ACHN (cell line): ENCODE measurements at regions of chr7 and their contacts with region 1.

Region 1: DNA sequence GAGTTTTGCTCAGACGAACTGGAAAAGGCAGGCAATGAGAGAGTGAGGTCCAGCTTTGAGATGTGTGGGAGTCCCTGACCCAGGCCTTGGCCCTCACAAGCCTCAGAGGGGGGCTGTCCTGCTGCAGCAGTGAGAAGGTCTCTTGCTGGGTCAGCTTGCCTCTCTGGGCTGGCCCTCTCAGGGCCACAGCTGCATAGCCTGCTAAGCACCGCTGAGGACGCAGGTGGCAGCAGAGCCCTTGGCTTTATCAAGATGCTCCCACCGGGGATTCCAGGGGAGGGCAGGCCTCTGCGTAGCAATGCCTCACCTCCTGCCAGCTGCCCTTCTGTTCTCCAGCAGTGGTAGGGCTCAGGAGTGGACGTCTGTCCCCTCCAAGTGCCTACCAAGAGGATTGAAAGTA is 128.7 kb downstream of the COBL start:
- DNase-seq: no peak

Region 2: GRCh38 chr7:50953820-50954219 is 234.1 kb before region 1 on chr7:
- in situ Hi-C with region 1: no loop called
- DNase-seq: no peak

Region 3: DNA sequence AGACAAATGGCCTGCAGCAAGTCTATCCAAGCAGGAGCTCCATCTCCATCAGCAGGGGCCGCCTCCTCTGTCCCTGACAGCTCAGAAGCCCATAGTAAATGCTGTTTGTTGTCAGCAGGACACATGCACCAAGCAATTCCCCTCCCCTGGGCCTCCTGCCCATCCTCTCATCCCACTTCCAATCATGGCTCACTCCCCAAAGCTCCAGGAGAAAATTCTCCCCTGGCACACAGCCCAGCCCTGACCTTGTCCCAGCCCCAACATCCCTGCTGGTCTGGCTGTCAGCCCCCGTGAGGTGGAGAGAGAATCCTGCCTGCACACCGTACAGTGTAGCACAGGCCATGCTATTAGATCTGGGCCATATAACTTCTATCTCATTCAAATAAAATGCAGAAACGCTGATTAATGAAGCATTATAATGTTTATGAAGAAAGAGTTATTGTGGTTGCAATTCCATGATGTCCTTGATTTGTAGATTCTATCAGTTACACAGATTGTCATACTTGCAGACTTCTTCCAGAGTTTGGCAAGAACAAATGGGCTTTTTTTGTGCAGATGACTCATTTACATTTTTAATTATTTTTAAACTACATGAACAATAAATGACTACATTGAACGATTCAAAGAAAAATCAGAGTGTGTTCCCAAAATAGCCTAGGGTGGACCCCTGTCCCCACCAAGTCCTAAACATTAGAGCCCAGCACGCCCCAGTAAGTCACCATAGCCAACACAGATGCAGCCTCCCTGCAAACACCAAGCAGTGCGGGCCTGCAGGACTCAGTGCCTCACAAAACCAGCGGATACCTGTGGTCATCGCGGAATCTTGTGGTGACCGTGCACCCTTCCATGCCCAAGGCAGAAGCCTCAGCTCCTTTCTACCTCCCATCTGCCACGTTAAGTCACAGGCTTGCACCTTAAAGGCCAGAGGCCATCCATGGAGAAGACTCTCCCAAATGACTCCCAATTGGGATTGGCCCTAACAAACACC is 58.6 kb after region 1 on chr7:
- in situ Hi-C with region 1: no loop called
- DNase-seq: no peak

Region 4: DNA sequence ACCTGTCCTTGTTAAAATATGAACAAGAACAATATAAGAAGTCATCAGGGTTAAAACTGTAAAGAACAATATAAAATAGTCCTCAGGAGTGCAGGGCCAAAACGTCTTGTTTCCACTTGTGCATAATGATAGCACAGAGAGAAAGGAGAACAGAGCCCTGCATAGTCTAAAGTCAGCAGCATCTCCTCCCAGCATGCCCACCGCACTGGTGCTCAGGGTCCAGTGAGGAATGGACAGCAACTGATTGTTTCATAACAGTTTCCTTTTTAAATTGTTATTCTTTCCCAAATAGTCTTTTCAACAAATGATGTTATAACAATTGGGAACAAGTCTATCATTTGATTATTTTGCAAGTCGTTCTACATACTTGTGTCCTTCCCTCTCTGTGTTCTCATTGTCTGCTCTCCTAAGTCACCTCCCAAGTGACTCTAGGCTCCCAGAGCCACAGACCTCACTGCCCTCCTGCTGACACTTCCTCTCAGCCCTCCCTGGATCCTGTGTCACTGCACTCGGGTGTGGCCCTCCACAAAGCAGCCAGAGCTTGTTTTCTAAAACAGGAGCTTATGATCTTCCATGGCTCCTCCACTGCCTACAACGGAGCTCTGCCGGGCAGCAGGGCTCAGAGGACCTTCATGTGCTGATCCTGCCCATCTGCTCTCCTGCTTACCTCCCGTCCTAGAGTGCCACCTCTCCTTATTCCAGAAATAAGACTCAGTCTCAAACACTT is 101.1 kb after region 1 on chr7:
- in situ Hi-C with region 1: loop called (anchors 25 kb)
- DNase-seq: no peak